Mammary epithelial cell (primary cell): ENCODE measurements at regions of chr1 and their contacts with region 1.

Region 1: GRCh38 chr1:231534703-231535159 is 6.3 kb downstream of the TSNAX start:
- DNase-seq: no peak
- H3K4me3 ChIP-seq: no peak overlapping the region
- H3K27ac ChIP-seq: no peak overlapping the region
- H3K4me1 ChIP-seq: peaks cover 4% of the 10 kb centered on the region
- H3K27me3 ChIP-seq: no peaks in the 10 kb centered on the region
- CTCF ChIP-seq: no peak

Region 2: GRCh38 chr1:231423648-231424047 is 111.1 kb before region 1 on chr1:
- CTCF ChIA-PET with region 1: no interaction called
- dilution Hi-C with region 1: no loop called
- in situ Hi-C with region 1: no loop called
- intact Hi-C with region 1: no loop called
- DNase-seq: no peak
- H3K4me3 ChIP-seq: no peak overlapping the region
- H3K27ac ChIP-seq: no peak overlapping the region
- H3K4me1 ChIP-seq: peaks cover 5% of the 10 kb centered on the region
- H3K27me3 ChIP-seq: no peaks in the 10 kb centered on the region
- CTCF ChIP-seq: no peak

Region 3: DNA sequence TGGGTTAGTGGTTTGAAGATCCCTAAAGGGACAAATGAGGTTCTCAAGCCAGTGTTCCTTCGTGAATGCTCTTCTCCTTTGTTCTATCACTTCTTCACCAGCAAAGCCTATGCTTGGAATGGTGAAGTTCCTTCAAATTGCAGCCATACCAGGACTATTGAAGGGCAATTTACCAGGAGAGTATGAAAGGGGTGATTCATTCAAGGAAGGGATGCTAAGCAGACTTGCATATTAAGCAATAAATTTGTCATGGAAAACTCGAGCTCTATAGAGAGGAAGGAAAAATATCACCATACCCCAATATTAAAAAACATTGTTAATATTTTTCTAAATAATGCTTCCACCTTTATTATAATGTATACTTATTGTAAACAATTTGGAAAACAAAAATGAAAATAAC is 15.6 kb before region 1 on chr1:
- CTCF ChIA-PET with region 1: interaction called, 13 read pairs
- dilution Hi-C with region 1: no loop called
- in situ Hi-C with region 1: no loop called
- intact Hi-C with region 1: no loop called
- DNase-seq: no peak
- H3K4me3 ChIP-seq: no peak overlapping the region
- H3K27ac ChIP-seq: no peak overlapping the region
- H3K4me1 ChIP-seq: no peaks in the 10 kb centered on the region
- H3K27me3 ChIP-seq: no peaks in the 10 kb centered on the region
- CTCF ChIP-seq: no peak